ENCODE measurements at regions of chr9 and their contacts with region 1.

Region 1: DNA sequence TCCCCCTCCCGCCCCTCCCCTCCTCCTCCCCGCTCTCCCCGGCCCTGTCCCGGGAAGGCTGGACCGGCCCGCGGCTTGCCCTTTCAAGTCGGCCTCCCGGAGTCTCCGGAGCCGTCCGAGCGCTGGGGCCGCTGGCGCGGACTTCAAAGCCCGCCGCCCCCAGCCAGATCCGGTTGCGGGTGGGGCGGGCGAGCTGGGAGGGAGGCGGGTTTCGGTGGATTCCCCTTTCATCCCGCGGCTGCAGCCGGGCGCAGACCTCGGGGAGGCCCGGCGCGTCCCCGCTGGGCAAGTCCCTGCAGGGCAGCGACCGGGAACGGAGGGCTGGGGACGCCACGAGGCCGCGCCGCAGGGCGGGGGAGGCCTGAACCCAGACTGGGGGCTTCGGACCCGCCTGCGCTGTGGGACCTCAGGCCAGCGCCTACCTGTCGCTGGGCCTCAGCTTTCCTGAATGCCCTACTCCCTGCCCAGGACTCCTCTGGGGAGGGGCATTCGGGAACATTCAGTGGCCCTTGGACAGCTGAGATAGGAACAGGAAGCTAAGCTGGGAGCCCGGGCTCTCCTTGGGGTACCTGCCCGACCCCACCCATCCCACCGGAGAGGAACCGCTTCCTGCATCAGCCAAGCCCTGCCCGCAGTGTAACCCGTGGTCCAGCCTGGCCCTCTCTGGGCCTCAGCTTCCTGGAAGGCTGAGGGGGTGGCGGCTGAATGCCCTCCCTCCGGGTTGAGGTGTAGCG is 23.4 kb downstream of the C9orf50 start:
- DNase-seq: peak; percentile 93
- ATAC-seq: peak; percentile 80
- H3K4me3 ChIP-seq: peak overlapping the region; percentile 15 to 76 (median 47); a peak in 5 of 6 replicates
- H3K27ac ChIP-seq: peak overlapping the region; percentile 99
- H3K4me1 ChIP-seq: peaks cover 85% of the 10 kb centered on the region
- H3K27me3 ChIP-seq: no peaks in the 10 kb centered on the region
- CTCF ChIP-seq: no peak
- EP300 ChIP-seq: peak; percentile 91 to 96; a peak in 3 of 4 replicates
- POLR2A ChIP-seq: peak; percentile 68 to 79
- RAD21 ChIP-seq: peak; percentile 67

Region 2: DNA sequence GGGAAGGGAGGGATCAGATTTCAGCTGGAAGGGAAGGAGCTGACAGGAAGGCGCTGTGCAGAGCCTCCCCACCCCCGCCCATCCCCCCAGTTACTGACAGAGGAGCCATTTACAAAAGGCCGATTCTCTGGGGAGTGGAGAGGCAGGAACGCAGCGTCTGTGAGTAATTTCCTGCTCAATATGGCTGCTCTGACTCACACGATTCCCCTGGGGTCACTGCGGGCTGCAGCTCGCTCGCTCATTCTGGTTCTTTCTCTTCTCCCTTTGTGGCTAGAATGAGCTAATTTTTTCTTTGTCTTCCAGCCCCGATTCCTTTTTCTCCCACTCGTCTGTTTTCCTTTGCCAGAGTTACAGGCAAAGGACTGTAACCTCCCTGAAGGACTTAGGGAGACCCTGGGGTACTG is 457.5 kb before region 1 on chr9:
- CTCF ChIA-PET with region 1: no interaction called
- POLR2A ChIA-PET with region 1: interaction called, 17 read pairs
- in situ Hi-C with region 1: no loop called
- intact Hi-C with region 1: no loop called
- DNase-seq: peak; percentile 94
- ATAC-seq: peak; percentile 81
- H3K4me3 ChIP-seq: peak overlapping the region; percentile 57 to 75 (median 67)
- H3K27ac ChIP-seq: peak overlapping the region; percentile 98
- H3K4me1 ChIP-seq: peaks cover 51% of the 10 kb centered on the region
- H3K27me3 ChIP-seq: no peaks in the 10 kb centered on the region
- CTCF ChIP-seq: no peak
- EP300 ChIP-seq: peak in 1 of 2 experiments; percentile 63; a peak in 2 of 4 replicates
- POLR2A ChIP-seq: peak; percentile 75 to 78
- RAD21 ChIP-seq: no peak

Region 3: GRCh38 chr9:129487642-129488409 is 109.7 kb before region 1 on chr9:
- CTCF ChIA-PET with region 1: no interaction called
- POLR2A ChIA-PET with region 1: interaction called, 14 read pairs
- in situ Hi-C with region 1: no loop called
- intact Hi-C with region 1: no loop called
- DNase-seq: no peak
- ATAC-seq: peak; percentile 14
- H3K4me3 ChIP-seq: peak overlapping the region; percentile 68 to 86 (median 72); a peak in 5 of 6 replicates
- H3K27ac ChIP-seq: peak overlapping the region; percentile 91
- H3K4me1 ChIP-seq: peaks cover 87% of the 10 kb centered on the region
- H3K27me3 ChIP-seq: no peaks in the 10 kb centered on the region; a peak in 1 of 5 replicates
- CTCF ChIP-seq: no peak
- EP300 ChIP-seq: no peak
- POLR2A ChIP-seq: peak in 1 of 2 experiments; percentile 41; a peak in 1 of 4 replicates
- RAD21 ChIP-seq: no peak; the same call in 1 of the 2 replicates

Region 4: GRCh38 chr9:129557192-129558036 is 40.1 kb before region 1 on chr9:
- CTCF ChIA-PET with region 1: no interaction called
- POLR2A ChIA-PET with region 1: interaction called, 84 read pairs
- in situ Hi-C with region 1: no loop called
- intact Hi-C with region 1: no loop called
- DNase-seq: peak; percentile 97
- ATAC-seq: peak; percentile 82
- H3K4me3 ChIP-seq: peak overlapping the region; percentile 8 to 65 (median 44); a peak in 5 of 6 replicates
- H3K27ac ChIP-seq: peak overlapping the region; percentile 95
- H3K4me1 ChIP-seq: peaks cover 97% of the 10 kb centered on the region
- H3K27me3 ChIP-seq: no peaks in the 10 kb centered on the region
- CTCF ChIP-seq: 0 out of 2 replicates have a peak, but pooled peaks have one; percentile 5
- EP300 ChIP-seq: peak; percentile 78 to 98; a peak in 3 of 4 replicates
- POLR2A ChIP-seq: peak in 1 of 2 experiments; percentile 49; a peak in 2 of 4 replicates
- RAD21 ChIP-seq: peak; percentile 78

Region 5: GRCh38 chr9:129576331-129577224 is 20.9 kb before region 1 on chr9:
- CTCF ChIA-PET with region 1: no interaction called
- POLR2A ChIA-PET with region 1: interaction called, 110 read pairs
- in situ Hi-C with region 1: no loop called
- intact Hi-C with region 1: no loop called
- DNase-seq: no peak
- ATAC-seq: no peak
- H3K4me3 ChIP-seq: no peak overlapping the region
- H3K27ac ChIP-seq: no peak overlapping the region
- H3K4me1 ChIP-seq: peaks cover 62% of the 10 kb centered on the region
- H3K27me3 ChIP-seq: no peaks in the 10 kb centered on the region; a peak in 1 of 5 replicates
- CTCF ChIP-seq: no peak
- EP300 ChIP-seq: no peak
- POLR2A ChIP-seq: no peak
- RAD21 ChIP-seq: no peak

Region 6: GRCh38 chr9:129610473-129611301 is 13.2 kb after region 1 on chr9:
- CTCF ChIA-PET with region 1: no interaction called
- POLR2A ChIA-PET with region 1: interaction called, 72 read pairs
- in situ Hi-C with region 1: no loop called
- intact Hi-C with region 1: no loop called
- DNase-seq: peak; percentile 48
- ATAC-seq: peak; percentile 57
- H3K4me3 ChIP-seq: peak overlapping the region; percentile 69 to 87 (median 81)
- H3K27ac ChIP-seq: peak overlapping the region; percentile 58
- H3K4me1 ChIP-seq: peaks cover 62% of the 10 kb centered on the region
- H3K27me3 ChIP-seq: no peaks in the 10 kb centered on the region
- CTCF ChIP-seq: peak; percentile 81
- EP300 ChIP-seq: no peak
- POLR2A ChIP-seq: no peak
- RAD21 ChIP-seq: peak; percentile 100